ENCODE measurements at regions of chr2 and their contacts with region 1.

Region 1: DNA sequence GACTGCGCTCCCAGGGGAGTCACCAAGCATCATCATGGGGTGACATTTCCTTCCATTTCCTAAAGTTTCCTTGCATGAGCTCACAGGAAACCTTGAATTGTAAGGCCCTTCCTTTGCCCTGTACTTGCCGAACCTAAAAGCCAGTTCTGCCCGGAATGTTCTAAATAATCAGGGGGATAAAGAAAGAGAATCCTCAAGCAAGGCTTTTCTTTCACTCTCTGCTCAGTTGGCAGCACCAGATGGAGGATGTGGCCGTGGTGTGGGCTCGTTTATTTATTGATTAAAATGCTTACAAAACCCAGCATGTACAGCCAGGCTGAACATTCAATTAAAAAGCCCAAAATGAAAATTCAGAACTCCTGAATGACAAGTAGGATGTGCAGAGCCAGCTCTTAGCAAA is 170.5 kb downstream of the SH3RF3 start:
- DNase-seq: no peak

Region 2: GRCh38 chr2:109260886-109261700 is 38.4 kb before region 1 on chr2:
- intact Hi-C with region 1: no loop called
- DNase-seq: no peak

Region 3: GRCh38 chr2:109331896-109332848 is 32.6 kb after region 1 on chr2:
- intact Hi-C with region 1: loop called in 1 of 2 experiments (anchors 1 kb)
- DNase-seq: peak; percentile 95

Measured in posterior vena cava (tissue), 2 donors.